T-cell (primary cell): ENCODE measurements at regions of chr2 and their contacts with region 1.

Region 1: GRCh38 chr2:172931918-172932520 is 143.6 kb upstream of the MAP3K20 start:
- DNase-seq: peak; percentile 4 to 77 (median 50)
- ATAC-seq: peak; percentile 36 to 45 (median 42)
- H3K4me3 ChIP-seq: no peak overlapping the region
- H3K4me3 Mint-ChIP-seq: peak overlapping the region in 1 of 3 donors; percentile 43
- H3K27ac ChIP-seq: no peak overlapping the region
- H3K27ac Mint-ChIP-seq: no peak overlapping the region
- H3K4me1 ChIP-seq: peaks cover 5 to 6% of the 10 kb centered on the region in 2 experiments
- H3K4me1 Mint-ChIP-seq: peaks cover 5 to 12% (median 9%) of the 10 kb centered on the region in 3 donors
- H3K27me3 ChIP-seq: no peaks in the 10 kb centered on the region
- H3K27me3 Mint-ChIP-seq: peaks cover 4 to 20% of the 10 kb centered on the region in 2 donors

Region 2: DNA sequence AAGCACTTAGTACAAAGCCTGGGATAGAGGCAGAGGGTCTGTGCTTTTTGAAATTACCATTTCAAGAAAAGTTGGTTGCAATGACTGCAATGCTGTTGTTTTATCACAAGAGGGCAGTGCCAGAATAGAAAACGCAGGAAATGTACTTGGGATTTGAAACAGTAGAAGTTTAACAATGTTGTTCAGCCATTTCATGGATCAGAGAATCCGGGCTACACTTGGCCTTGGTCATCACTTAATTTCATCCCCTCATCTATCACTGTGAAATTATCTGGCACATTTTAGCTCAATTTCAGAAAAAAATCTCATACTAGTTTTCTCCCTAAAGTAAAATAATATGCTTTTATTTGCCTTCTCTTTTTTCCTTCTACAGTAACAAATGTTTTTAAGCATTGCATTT is 125.5 kb before region 1 on chr2:
- CTCF ChIA-PET with region 1: interaction called, 8 to 21 read pairs
- POLR2A ChIA-PET with region 1: no interaction called
- DNase-seq: peak in 2 of 35 experiments; percentile 1 to 41
- ATAC-seq: no peak
- H3K4me3 ChIP-seq: no peak overlapping the region
- H3K4me3 Mint-ChIP-seq: no peak overlapping the region
- H3K27ac ChIP-seq: no peak overlapping the region
- H3K27ac Mint-ChIP-seq: no peak overlapping the region
- H3K4me1 ChIP-seq: no peaks in the 10 kb centered on the region
- H3K4me1 Mint-ChIP-seq: peaks cover 0 to 4% (median 0%) of the 10 kb centered on the region in 3 donors
- H3K27me3 ChIP-seq: peaks cover 0 to 8% of the 10 kb centered on the region in 2 experiments
- H3K27me3 Mint-ChIP-seq: peaks cover 4 to 5% of the 10 kb centered on the region in 2 donors